CD4-positive, alpha-beta T cell (primary cell): ENCODE measurements at regions of chr10 and their contacts with region 1.

Region 1: DNA sequence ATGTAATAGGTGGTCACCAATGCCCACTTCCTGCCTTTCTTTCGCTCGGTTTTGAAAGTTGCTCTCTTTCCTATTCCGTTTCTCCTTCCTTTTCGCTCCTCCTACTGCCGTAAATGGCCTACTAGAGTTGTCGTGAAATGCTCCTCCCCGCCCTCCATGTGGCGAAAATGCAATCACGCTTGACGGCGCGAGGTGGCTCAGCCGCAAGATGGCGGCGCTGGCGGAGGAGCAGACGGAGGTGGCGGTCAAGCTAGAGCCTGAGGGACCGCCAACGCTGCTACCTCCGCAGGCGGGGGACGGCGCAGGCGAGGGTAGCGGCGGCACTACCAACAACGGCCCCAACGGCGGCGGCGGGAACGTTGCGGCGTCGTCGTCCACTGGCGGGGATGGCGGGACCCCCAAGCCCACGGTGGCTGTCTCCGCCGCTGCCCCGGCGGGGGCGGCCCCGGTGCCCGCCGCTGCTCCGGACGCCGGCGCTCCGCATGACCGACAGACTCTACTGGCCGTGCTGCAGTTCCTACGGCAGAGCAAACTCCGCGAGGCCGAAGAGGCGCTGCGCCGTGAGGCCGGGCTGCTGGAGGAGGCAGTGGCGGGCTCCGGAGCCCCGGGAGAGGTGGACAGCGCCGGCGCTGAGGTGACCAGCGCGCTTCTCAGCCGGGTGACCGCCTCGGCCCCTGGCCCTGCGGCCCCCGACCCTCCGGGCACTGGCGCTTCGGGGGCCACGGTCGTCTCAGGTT is at the start of gene TAF5:
- DNase-seq: peak; percentile 78 to 96 (median 85)
- ATAC-seq: peak; percentile 61
- H3K4me3 ChIP-seq: peak within 1 kb of the TSS; percentile 60
- H3K4me3 Mint-ChIP-seq: peak within 1 kb of the TSS; percentile 100
- H3K27ac ChIP-seq: peak within 1 kb of the TSS; percentile 55 to 83
- H3K27ac Mint-ChIP-seq: peak within 1 kb of the TSS; percentile 80
- H3K4me1 ChIP-seq: peaks cover 22% of the 10 kb centered on the region
- H3K4me1 Mint-ChIP-seq: peaks cover 23% of the 10 kb centered on the region
- H3K27me3 ChIP-seq: no peaks in the 10 kb centered on the region
- H3K27me3 Mint-ChIP-seq: no peaks in the 10 kb centered on the region
- CTCF ChIP-seq: peak; percentile 22
- total RNA-seq, gene TAF5: 3.8 to 4.0 TPM

Region 2: DNA sequence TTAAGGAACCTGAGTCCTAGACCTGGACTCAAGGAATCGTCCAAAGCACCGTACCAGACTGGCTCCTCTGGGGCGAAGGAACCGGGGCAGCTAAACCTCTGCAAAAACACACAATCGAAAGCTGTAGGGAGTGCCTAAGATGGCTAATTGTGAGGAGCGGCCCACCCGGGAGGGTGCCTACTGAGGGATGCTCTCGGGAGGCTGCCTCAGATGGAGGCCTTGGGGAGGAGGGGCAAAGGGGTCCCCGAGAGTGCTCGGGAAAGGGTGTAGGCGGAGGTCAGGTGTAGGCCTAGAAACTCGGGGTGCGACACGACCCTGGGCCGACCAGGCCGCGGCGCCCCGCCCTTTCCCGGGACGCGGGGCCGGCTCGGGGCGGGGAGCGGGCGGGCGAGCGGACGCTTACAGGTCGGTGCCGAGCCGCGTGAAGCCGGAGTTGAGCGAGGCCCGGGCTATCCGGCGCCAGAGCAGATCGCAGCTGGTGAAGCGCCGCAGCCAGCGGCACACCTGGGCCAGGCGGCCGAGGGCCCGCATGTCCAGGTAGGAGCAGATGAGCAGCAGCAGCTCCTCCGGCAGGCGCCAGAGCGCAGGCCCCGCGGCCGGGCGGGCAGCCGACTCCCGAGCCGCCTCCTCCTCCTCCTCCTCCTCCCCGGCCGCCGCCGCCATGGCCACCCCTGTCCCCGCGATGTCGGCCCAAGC is 1673.8 kb before region 1 on chr10:
- CTCF ChIA-PET with region 1: no interaction called
- POLR2A ChIA-PET with region 1: no interaction called
- intact Hi-C with region 1: loop called in 1 of 2 experiments (anchors 10 kb)
- DNase-seq: peak; percentile 46 to 83 (median 63)
- ATAC-seq: peak; percentile 58
- H3K4me3 ChIP-seq: peak overlapping the region; percentile 88
- H3K4me3 Mint-ChIP-seq: peak overlapping the region; percentile 99
- H3K27ac ChIP-seq: peak overlapping the region; percentile 96 to 97
- H3K27ac Mint-ChIP-seq: peak overlapping the region; percentile 98
- H3K4me1 ChIP-seq: peaks cover 23% of the 10 kb centered on the region
- H3K4me1 Mint-ChIP-seq: peaks cover 57% of the 10 kb centered on the region
- H3K27me3 ChIP-seq: no peaks in the 10 kb centered on the region
- H3K27me3 Mint-ChIP-seq: no peaks in the 10 kb centered on the region
- CTCF ChIP-seq: no peak

Region 3: DNA sequence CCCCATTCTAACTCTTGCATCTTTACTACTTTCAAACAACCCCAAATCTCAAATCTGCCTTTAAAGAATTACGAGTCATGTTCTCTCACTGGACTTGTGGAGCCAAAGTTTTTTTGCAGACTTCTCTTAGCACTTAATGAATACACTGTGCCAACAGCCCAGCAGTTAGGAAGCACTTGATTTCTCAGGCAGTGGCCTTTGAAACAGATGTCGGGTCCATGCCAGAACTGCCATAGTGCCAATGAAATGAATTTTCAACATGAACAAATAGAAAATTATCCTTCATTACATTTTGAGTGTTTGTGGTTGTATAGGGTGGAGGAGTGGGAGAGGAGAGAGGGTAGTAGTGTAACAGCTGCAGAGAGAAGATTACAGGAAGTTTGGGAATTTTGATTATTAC is 508.0 kb before region 1 on chr10:
- CTCF ChIA-PET with region 1: no interaction called
- POLR2A ChIA-PET with region 1: interaction called, 3 read pairs
- intact Hi-C with region 1: loop called in 1 of 2 experiments (anchors 5 kb)
- DNase-seq: no peak
- ATAC-seq: no peak
- H3K4me3 ChIP-seq: no peak overlapping the region
- H3K4me3 Mint-ChIP-seq: no peak overlapping the region
- H3K27ac ChIP-seq: no peak overlapping the region
- H3K27ac Mint-ChIP-seq: no peak overlapping the region
- H3K4me1 ChIP-seq: peaks cover 4% of the 10 kb centered on the region
- H3K4me1 Mint-ChIP-seq: peaks cover 7% of the 10 kb centered on the region
- H3K27me3 ChIP-seq: no peaks in the 10 kb centered on the region
- H3K27me3 Mint-ChIP-seq: no peaks in the 10 kb centered on the region
- CTCF ChIP-seq: no peak

Region 4: DNA sequence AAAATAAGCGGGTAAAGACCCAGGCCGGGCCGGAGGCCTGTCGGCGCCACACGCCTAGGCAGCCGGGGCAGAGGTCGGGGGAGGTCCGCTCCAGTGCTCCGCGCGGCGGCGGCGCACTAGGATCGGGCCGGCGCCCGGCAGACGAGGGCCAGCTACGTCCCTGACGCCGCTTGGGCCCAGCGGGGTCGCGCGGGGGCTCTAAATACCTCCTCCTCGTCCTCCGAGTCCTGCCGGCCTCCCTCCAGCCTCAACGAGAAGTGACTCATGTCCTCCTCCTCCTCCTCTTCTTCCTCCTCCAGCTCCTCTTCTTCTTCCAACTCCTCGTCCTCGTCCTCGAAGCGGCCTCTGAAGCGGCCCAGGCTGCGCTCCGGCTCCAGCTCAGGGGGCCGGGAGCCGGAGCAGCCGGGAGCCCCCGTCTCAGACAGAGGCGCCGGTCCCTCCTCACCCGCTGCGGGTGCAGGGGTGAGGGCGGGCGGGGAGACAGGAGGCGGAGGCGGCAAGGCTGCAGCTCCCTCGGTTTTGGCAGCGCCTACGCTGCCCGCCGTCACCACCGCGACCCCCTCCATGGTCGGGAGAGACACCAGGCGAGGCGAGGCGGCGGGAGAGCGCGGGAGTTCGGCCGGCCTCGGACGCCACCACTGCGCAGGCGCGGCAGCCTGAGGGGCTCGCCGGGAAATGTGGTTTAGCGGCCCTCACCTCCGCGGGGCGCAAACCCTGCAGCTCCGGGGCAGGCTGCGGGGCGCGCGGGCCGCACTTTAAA is 17.3 kb before region 1 on chr10 and contains the start of gene PCGF6:
- CTCF ChIA-PET with region 1: interaction called, 3 read pairs
- POLR2A ChIA-PET with region 1: interaction called, 28 read pairs
- intact Hi-C with region 1: loop called (anchors 1 to 2 kb)
- DNase-seq: peak; percentile 39 to 83 (median 60)
- ATAC-seq: peak; percentile 86
- H3K4me3 ChIP-seq: peak within 1 kb of the TSS; percentile 77
- H3K4me3 Mint-ChIP-seq: peak within 1 kb of the TSS; percentile 86
- H3K27ac ChIP-seq: peak within 1 kb of the TSS in 1 of 2 donors; percentile 14
- H3K27ac Mint-ChIP-seq: peak within 1 kb of the TSS; percentile 61
- H3K4me1 ChIP-seq: peaks cover 22% of the 10 kb centered on the region
- H3K4me1 Mint-ChIP-seq: peaks cover 11% of the 10 kb centered on the region
- H3K27me3 ChIP-seq: no peaks in the 10 kb centered on the region
- H3K27me3 Mint-ChIP-seq: no peaks in the 10 kb centered on the region
- CTCF ChIP-seq: no peak
- total RNA-seq, gene PCGF6: 1.6 to 1.8 TPM

Region 5: GRCh38 chr10:103396064-103396788 is 28.3 kb after region 1 on chr10 and contains the starts of genes ATP5MK and PDCD11:
- CTCF ChIA-PET with region 1: interaction called, 3 read pairs
- POLR2A ChIA-PET with region 1: interaction called, 27 read pairs
- intact Hi-C with region 1: loop called (anchors 1 kb)
- DNase-seq: peak; percentile 85 to 97 (median 92)
- ATAC-seq: peak; percentile 98
- H3K4me3 ChIP-seq: peak within 1 kb of the TSS; percentile 95
- H3K4me3 Mint-ChIP-seq: peak within 1 kb of the TSS; percentile 99
- H3K27ac ChIP-seq: peak within 1 kb of the TSS; percentile 61 to 67
- H3K27ac Mint-ChIP-seq: peak within 1 kb of the TSS; percentile 96
- H3K4me1 ChIP-seq: peaks cover 23% of the 10 kb centered on the region
- H3K4me1 Mint-ChIP-seq: peaks cover 55% of the 10 kb centered on the region
- H3K27me3 ChIP-seq: no peaks in the 10 kb centered on the region
- H3K27me3 Mint-ChIP-seq: no peaks in the 10 kb centered on the region
- CTCF ChIP-seq: no peak
- total RNA-seq, gene ATP5MK: 107 to 111 TPM
- total RNA-seq, gene PDCD11: 13.3 to 16.4 TPM